CD4-positive, alpha-beta T cell (primary cell): ENCODE measurements at regions of chr1 and their contacts with region 1.

Region 1: GRCh38 chr1:22039594-22040285 is 12.8 kb upstream of the CDC42 start:
- DNase-seq: peak; percentile 79 to 98 (median 87)
- ATAC-seq: peak; percentile 92
- H3K4me3 ChIP-seq: peak overlapping the region; percentile 44
- H3K4me3 Mint-ChIP-seq: peak overlapping the region; percentile 59
- H3K27ac ChIP-seq: peak overlapping the region; percentile 95 to 97
- H3K27ac Mint-ChIP-seq: peak overlapping the region; percentile 99
- H3K4me1 ChIP-seq: peaks cover 82% of the 10 kb centered on the region
- H3K4me1 Mint-ChIP-seq: peaks cover 60% of the 10 kb centered on the region
- H3K27me3 ChIP-seq: no peaks in the 10 kb centered on the region
- H3K27me3 Mint-ChIP-seq: no peaks in the 10 kb centered on the region
- CTCF ChIP-seq: no peak

Region 2: GRCh38 chr1:21638531-21639356 is 401.0 kb before region 1 on chr1:
- CTCF ChIA-PET with region 1: no interaction called
- POLR2A ChIA-PET with region 1: no interaction called
- intact Hi-C with region 1: no loop called
- DNase-seq: no peak
- ATAC-seq: no peak
- H3K4me3 ChIP-seq: no peak overlapping the region
- H3K4me3 Mint-ChIP-seq: no peak overlapping the region
- H3K27ac ChIP-seq: no peak overlapping the region
- H3K27ac Mint-ChIP-seq: no peak overlapping the region
- H3K4me1 ChIP-seq: no peaks in the 10 kb centered on the region
- H3K4me1 Mint-ChIP-seq: no peaks in the 10 kb centered on the region
- H3K27me3 ChIP-seq: peaks cover 0 to 4% of the 10 kb centered on the region in 2 experiments
- H3K27me3 Mint-ChIP-seq: peaks cover 16% of the 10 kb centered on the region
- CTCF ChIP-seq: no peak

Region 3: DNA sequence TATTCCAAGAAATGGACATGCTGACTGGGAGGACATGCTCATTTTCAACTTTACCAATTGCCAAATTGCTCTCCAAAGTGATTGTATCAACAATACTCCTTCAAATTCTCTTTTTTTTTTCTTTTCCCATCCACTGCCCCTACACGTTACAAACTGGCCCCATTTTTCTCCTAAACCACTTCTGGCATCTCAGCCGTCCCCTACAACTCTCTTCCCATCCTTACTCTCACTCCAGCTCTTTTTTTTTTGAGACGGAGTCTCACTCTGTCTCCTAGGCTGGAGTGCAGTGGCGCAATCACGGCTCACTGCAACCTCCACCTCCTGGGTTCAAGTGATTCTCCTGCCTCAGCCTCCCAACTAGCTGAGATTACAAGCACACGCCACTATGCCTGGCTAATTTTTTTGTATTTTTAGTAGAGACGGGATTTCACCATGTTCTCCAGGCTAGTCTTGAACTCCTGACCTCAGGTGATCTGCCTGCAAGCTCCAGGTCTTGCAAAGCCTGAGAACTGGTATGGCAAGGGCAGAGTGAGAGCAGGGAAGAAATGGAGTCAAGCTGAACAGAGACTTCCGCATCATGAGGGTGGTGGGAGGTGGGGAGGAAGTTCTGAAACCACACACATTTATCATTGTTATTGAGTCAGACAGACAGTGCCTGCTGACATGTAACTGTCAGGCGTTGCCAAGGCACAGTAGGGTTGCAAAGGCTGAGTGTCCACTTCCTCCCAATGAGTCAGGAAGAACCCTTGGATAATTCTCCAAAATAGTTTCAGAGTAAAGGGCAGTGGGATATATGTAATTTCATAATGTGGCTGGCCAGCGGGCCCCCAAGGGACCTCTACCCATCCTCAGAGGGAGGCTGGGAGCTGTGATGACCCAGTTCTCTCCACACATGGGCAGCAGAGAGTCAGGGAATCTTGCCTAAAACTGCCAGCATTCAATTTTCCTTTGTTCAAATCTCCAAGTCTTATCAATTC is 20.9 kb before region 1 on chr1:
- CTCF ChIA-PET with region 1: interaction called, 58 read pairs
- POLR2A ChIA-PET with region 1: interaction called, 470 read pairs
- intact Hi-C with region 1: no loop called
- DNase-seq: peak; percentile 41 to 91 (median 58)
- ATAC-seq: peak; percentile 95
- H3K4me3 ChIP-seq: no peak overlapping the region
- H3K4me3 Mint-ChIP-seq: peak overlapping the region; percentile 57
- H3K27ac ChIP-seq: peak overlapping the region in 1 of 2 donors; percentile 65
- H3K27ac Mint-ChIP-seq: peak overlapping the region; percentile 89
- H3K4me1 ChIP-seq: peaks cover 43% of the 10 kb centered on the region
- H3K4me1 Mint-ChIP-seq: peaks cover 25% of the 10 kb centered on the region
- H3K27me3 ChIP-seq: no peaks in the 10 kb centered on the region
- H3K27me3 Mint-ChIP-seq: no peaks in the 10 kb centered on the region
- CTCF ChIP-seq: peak; percentile 35

Region 4: GRCh38 chr1:22089787-22090186 is 50.0 kb after region 1 on chr1:
- CTCF ChIA-PET with region 1: interaction called, 6 read pairs
- POLR2A ChIA-PET with region 1: interaction called, 14 read pairs
- intact Hi-C with region 1: no loop called
- DNase-seq: peak in 2 of 14 experiments; percentile 17 to 30
- ATAC-seq: no peak
- H3K4me3 ChIP-seq: peak overlapping the region; percentile 24
- H3K4me3 Mint-ChIP-seq: peak overlapping the region; percentile 74
- H3K27ac ChIP-seq: peak overlapping the region; percentile 3 to 25
- H3K27ac Mint-ChIP-seq: peak overlapping the region; percentile 81
- H3K4me1 ChIP-seq: peaks cover 35% of the 10 kb centered on the region
- H3K4me1 Mint-ChIP-seq: peaks cover 94% of the 10 kb centered on the region
- H3K27me3 ChIP-seq: no peaks in the 10 kb centered on the region
- H3K27me3 Mint-ChIP-seq: no peaks in the 10 kb centered on the region
- CTCF ChIP-seq: no peak

Region 5: GRCh38 chr1:22195802-22196440 is 156.2 kb after region 1 on chr1:
- CTCF ChIA-PET with region 1: no interaction called
- POLR2A ChIA-PET with region 1: no interaction called
- intact Hi-C with region 1: no loop called
- DNase-seq: no peak
- ATAC-seq: no peak
- H3K4me3 ChIP-seq: no peak overlapping the region
- H3K4me3 Mint-ChIP-seq: no peak overlapping the region
- H3K27ac ChIP-seq: no peak overlapping the region
- H3K27ac Mint-ChIP-seq: no peak overlapping the region
- H3K4me1 ChIP-seq: no peaks in the 10 kb centered on the region
- H3K4me1 Mint-ChIP-seq: no peaks in the 10 kb centered on the region
- H3K27me3 ChIP-seq: peaks cover 0 to 8% of the 10 kb centered on the region in 2 experiments
- H3K27me3 Mint-ChIP-seq: peaks cover 27% of the 10 kb centered on the region
- CTCF ChIP-seq: no peak